Lower lobe of right lung (tissue), 2 donors: ENCODE measurements at regions of chr5 and their contacts with region 1.

Region 1: GRCh38 chr5:74648835-74649293 is 8.3 kb upstream of the ENC1 start:
- DNase-seq: no peak
- ATAC-seq: peak; percentile 87 to 93
- H3K4me3 ChIP-seq: no peak overlapping the region
- H3K27ac ChIP-seq: no peak overlapping the region
- H3K4me1 ChIP-seq: peaks cover 6% of the 10 kb centered on the region
- H3K27me3 ChIP-seq: no peaks in the 10 kb centered on the region
- CTCF ChIP-seq: peak; percentile 77

Region 2: GRCh38 chr5:73902327-73903051 is 746.4 kb before region 1 on chr5:
- intact Hi-C with region 1: loop called (anchors 5 kb)
- DNase-seq: no peak
- ATAC-seq: peak; percentile 62 to 65
- H3K4me3 ChIP-seq: no peak overlapping the region
- H3K27ac ChIP-seq: no peak overlapping the region
- H3K4me1 ChIP-seq: peaks cover 19% of the 10 kb centered on the region
- H3K27me3 ChIP-seq: no peaks in the 10 kb centered on the region
- CTCF ChIP-seq: peak; percentile 89